IMR-90 (cell line): ENCODE measurements at regions of chr3 and their contacts with region 1.

Region 1: GRCh38 chr3:142723968-142724681 is at the start of gene TRPC1:
- DNase-seq: peak; percentile 69
- ATAC-seq: peak; percentile 92
- H3K4me3 ChIP-seq: peak within 1 kb of the TSS; percentile 95
- H3K27ac ChIP-seq: peak within 1 kb of the TSS; percentile 79
- H3K4me1 ChIP-seq: peaks cover 2% of the 10 kb centered on the region; the same call in 1 of the 2 replicates
- H3K27me3 ChIP-seq: no peaks in the 10 kb centered on the region
- CTCF ChIP-seq: no peak
- POLR2A ChIP-seq: peak; percentile 75
- RAD21 ChIP-seq: no peak
- total RNA-seq, gene TRPC1: 5.9 and 15.6 TPM in 2 replicates

Region 2: GRCh38 chr3:142595951-142596725 is 128.0 kb before region 1 on chr3 and contains the start of gene PLS1:
- CTCF ChIA-PET with region 1: no interaction called
- POLR2A ChIA-PET with region 1: no interaction called
- dilution Hi-C with region 1: no loop called
- in situ Hi-C with region 1: no loop called
- intact Hi-C with region 1: loop called (anchors 5 kb)
- DNase-seq: peak; percentile 70
- ATAC-seq: peak; percentile 96
- H3K4me3 ChIP-seq: peak within 1 kb of the TSS; percentile 81
- H3K27ac ChIP-seq: peak within 1 kb of the TSS; percentile 9; the same call in 1 of the 2 replicates
- H3K4me1 ChIP-seq: no peaks in the 10 kb centered on the region
- H3K27me3 ChIP-seq: no peaks in the 10 kb centered on the region
- CTCF ChIP-seq: no peak
- POLR2A ChIP-seq: peak; percentile 42; the same call in 1 of the 2 replicates
- RAD21 ChIP-seq: no peak; the same call in 1 of the 2 replicates
- total RNA-seq, gene PLS1: 0.90 and 1.7 TPM in 2 replicates

Region 3: DNA sequence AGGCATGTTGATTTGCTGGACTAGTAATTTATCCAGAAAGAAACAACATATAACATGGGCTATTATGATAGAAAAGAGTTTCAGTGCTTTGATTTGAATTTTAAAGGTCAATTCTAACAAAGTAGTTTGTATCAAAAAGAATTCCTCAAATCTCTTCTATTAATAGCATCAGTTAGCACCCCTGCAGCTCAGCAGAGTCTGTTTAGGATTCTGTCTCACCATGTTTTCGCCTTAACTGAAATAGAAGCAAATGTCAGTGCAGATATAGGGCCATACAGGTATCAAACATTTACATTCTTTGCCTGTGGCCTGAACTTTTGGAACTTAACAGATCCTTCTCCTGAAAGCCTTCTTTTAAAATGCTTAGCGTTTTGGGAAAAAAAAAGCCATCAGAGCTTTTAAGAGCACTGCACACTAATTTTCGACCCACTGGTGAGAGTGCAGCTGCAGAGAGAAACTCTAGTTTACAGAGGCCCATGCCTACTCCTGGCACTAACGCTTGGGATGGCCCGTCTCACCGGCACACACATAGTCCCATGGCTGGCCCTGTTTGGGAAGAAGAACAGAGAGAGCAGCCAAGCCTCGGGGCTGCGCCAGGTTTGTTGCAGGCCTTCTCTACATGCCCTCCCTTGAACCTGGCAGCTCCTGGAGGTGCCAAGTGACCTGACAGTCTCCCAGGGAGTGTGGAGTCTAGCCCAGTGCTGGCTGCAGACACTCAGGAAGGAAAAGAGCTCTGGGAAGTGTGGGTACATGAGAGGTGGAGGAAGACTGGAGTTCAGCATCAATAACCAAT is 249.3 kb after region 1 on chr3:
- CTCF ChIA-PET with region 1: no interaction called
- POLR2A ChIA-PET with region 1: no interaction called
- dilution Hi-C with region 1: no loop called
- in situ Hi-C with region 1: no loop called
- intact Hi-C with region 1: loop called (anchors 5 kb)
- DNase-seq: no peak
- ATAC-seq: no peak
- H3K4me3 ChIP-seq: no peak overlapping the region
- H3K27ac ChIP-seq: no peak overlapping the region
- H3K4me1 ChIP-seq: no peaks in the 10 kb centered on the region
- H3K27me3 ChIP-seq: peaks cover 19% of the 10 kb centered on the region
- CTCF ChIP-seq: no peak
- POLR2A ChIP-seq: no peak
- RAD21 ChIP-seq: no peak

Region 4: GRCh38 chr3:143757691-143758090 is 1033.6 kb after region 1 on chr3:
- CTCF ChIA-PET with region 1: no interaction called
- POLR2A ChIA-PET with region 1: no interaction called
- dilution Hi-C with region 1: no loop called
- in situ Hi-C with region 1: no loop called
- intact Hi-C with region 1: no loop called
- DNase-seq: no peak
- ATAC-seq: no peak
- H3K4me3 ChIP-seq: no peak overlapping the region
- H3K27ac ChIP-seq: no peak overlapping the region
- H3K4me1 ChIP-seq: no peaks in the 10 kb centered on the region
- H3K27me3 ChIP-seq: no peaks in the 10 kb centered on the region
- CTCF ChIP-seq: no peak
- POLR2A ChIP-seq: no peak
- RAD21 ChIP-seq: no peak